Endothelial cell of umbilical vein (primary cell): ENCODE measurements at regions of chr9 and their contacts with region 1.

Region 1: DNA sequence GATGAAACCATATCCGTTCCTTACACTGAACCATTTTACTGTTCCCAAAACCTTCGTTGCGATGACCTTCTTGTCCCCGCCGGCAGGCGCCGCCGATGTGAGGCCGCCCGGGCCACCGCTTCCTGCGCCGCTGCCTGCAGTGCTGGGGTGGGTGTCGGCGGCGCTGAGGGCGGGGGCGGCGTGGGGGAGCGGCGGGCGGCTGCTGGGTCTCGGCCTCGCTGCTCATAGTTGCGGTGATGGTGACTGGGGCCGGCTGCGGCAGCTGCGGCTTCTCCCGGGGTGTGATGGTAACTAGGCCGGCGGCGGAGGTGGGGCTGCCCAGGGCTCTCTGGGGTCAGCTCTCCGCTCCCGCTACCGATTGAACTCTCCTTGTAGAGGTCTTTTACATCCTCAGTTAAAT is 14.1 kb upstream of the OR2S2 start:
- DNase-seq: no peak
- H3K4me3 ChIP-seq: peak overlapping the region in 1 of 3 experiments; percentile 1
- H3K27ac ChIP-seq: no peak overlapping the region
- H3K4me1 ChIP-seq: no peaks in the 10 kb centered on the region
- H3K27me3 ChIP-seq: peaks cover 0 to 1% of the 10 kb centered on the region in 2 experiments
- CTCF ChIP-seq: no peak
- POLR2A ChIP-seq: no peak

Region 2: DNA sequence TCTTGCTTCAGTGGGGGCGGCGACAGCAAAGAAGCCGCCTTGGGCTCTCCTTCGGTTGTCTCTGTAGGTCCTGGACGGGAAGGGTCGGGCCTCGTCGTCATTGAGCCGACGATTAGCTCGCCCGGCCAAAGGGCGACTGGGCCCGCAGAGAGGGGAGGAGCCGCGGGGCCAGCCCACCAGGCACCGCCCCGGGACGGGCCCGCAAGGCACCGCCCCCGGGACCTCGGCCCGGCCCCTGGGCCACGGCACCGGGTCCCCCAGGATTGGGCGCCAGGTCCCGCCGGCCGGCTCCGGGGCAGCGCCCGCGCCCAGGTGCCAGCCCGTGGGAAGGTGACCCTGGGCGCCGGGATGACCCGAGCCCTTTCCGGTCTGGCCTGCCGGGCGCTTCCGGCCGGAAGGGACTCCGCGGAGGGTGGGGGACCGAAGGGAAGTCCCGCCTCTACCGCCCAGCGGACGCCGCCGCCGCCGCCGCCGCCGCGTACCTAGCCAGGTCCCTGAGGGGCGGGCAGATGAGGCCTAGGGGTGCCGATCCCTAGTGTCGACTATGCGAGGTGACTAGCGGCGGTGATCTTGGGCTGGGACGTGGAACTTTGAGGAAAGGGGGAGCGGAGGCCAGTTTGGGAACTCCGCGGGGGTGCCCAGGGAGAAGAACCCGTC is 223.1 kb before region 1 on chr9 and contains the starts of genes GBA2 and RGP1:
- CTCF ChIA-PET with region 1: no interaction called
- POLR2A ChIA-PET with region 1: no interaction called
- dilution Hi-C with region 1: no loop called
- intact Hi-C with region 1: no loop called
- DNase-seq: peak; percentile 75
- H3K4me3 ChIP-seq: peak within 1 kb of the TSS; percentile 66 to 99 (median 87)
- H3K27ac ChIP-seq: peak within 1 kb of the TSS; percentile 84
- H3K4me1 ChIP-seq: peaks cover 69% of the 10 kb centered on the region
- H3K27me3 ChIP-seq: no peaks in the 10 kb centered on the region
- CTCF ChIP-seq: no peak
- POLR2A ChIP-seq: peak; percentile 72
- total RNA-seq, gene GBA2: 158 and 196 TPM in 2 replicates
- total RNA-seq, gene RGP1: 23.3 and 29.0 TPM in 2 replicates

Region 3: DNA sequence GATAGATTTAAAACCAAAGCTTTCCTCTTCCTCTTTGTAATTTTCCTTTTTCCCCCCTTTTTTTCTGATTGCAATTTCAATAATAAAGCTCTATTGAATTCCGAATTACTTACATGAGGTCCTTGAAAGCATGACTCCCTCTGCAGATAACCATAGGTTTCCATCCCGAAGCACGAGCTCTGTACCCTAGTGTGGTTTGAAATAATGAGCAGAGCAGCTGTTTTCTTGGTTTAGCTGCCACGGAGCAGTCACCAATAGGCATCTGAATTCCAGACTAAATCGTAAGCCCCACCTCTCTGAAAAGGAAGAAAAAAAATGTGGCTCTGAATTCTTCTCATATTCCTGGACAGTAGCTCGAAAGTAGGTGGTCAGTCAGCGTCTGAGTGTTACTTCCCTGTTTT is 304.7 kb after region 1 on chr9:
- CTCF ChIA-PET with region 1: no interaction called
- POLR2A ChIA-PET with region 1: interaction called, 14 read pairs
- dilution Hi-C with region 1: no loop called
- intact Hi-C with region 1: no loop called
- DNase-seq: peak; percentile 88
- H3K4me3 ChIP-seq: peak overlapping the region in 2 of 3 experiments; percentile 1 to 40
- H3K27ac ChIP-seq: no peak overlapping the region
- H3K4me1 ChIP-seq: peaks cover 8% of the 10 kb centered on the region
- H3K27me3 ChIP-seq: no peaks in the 10 kb centered on the region
- CTCF ChIP-seq: no peak
- POLR2A ChIP-seq: no peak